Panc1 (cell line): ENCODE measurements at regions of chr19 and their contacts with region 1.

Region 1: DNA sequence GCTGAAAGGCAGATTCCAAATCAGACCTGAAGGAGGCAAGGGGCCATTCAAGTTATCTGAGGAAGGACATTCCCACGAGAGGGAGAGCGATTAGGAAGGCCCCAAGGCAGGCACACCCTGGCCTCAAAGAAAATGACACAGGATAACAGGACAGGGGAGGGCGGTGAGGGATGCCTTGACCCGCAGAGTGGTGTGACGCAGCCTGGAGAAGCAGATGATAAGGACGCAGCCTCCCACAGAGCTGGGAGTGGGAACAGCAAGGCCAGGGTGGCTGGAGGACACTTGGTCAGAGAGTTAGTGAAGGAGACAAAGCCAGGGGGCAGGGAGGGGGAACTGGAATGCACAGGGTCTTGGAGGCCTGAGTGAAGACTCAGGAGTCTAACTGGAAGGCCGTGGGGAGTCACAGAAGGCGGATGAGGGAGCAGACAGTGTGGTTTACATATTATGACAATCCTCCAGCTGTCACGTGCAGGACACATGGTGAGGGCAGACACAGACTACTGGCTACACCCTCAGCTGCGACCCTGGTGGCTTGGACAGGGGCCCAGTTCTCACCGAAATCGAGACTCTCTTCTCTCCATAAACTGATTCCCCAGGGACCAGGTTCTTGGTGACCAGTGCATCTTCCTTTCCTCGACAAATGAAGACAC is 5.8 kb upstream of the DYRK1B start:
- DNase-seq: no peak
- ATAC-seq: no peak
- H3K4me3 ChIP-seq: no peak overlapping the region
- H3K27ac ChIP-seq: no peak overlapping the region
- H3K4me1 ChIP-seq: peaks cover 37% of the 10 kb centered on the region
- H3K27me3 ChIP-seq: no peaks in the 10 kb centered on the region
- CTCF ChIP-seq: no peak

Region 2: GRCh38 chr19:39599116-39599515 is 240.7 kb before region 1 on chr19:
- CTCF ChIA-PET with region 1: no interaction called
- POLR2A ChIA-PET with region 1: no interaction called
- in situ Hi-C with region 1: no loop called
- intact Hi-C with region 1: no loop called
- DNase-seq: no peak
- ATAC-seq: no peak
- H3K4me3 ChIP-seq: no peak overlapping the region
- H3K27ac ChIP-seq: no peak overlapping the region
- H3K4me1 ChIP-seq: no peaks in the 10 kb centered on the region
- H3K27me3 ChIP-seq: peaks cover 88% of the 10 kb centered on the region
- CTCF ChIP-seq: 0 out of 2 replicates have a peak, but pooled peaks have one; percentile 1

Region 3: GRCh38 chr19:39813264-39813993 is 26.4 kb before region 1 on chr19:
- CTCF ChIA-PET with region 1: interaction called, 18 read pairs
- POLR2A ChIA-PET with region 1: interaction called, 24 read pairs
- in situ Hi-C with region 1: no loop called
- intact Hi-C with region 1: no loop called
- DNase-seq: no peak
- ATAC-seq: peak; percentile 5; the same call in 1 of the 2 replicates
- H3K4me3 ChIP-seq: no peak overlapping the region
- H3K27ac ChIP-seq: no peak overlapping the region
- H3K4me1 ChIP-seq: no peaks in the 10 kb centered on the region
- H3K27me3 ChIP-seq: no peaks in the 10 kb centered on the region
- CTCF ChIP-seq: no peak